ENCODE measurements at regions of chr20 and their contacts with region 1.

Region 1: DNA sequence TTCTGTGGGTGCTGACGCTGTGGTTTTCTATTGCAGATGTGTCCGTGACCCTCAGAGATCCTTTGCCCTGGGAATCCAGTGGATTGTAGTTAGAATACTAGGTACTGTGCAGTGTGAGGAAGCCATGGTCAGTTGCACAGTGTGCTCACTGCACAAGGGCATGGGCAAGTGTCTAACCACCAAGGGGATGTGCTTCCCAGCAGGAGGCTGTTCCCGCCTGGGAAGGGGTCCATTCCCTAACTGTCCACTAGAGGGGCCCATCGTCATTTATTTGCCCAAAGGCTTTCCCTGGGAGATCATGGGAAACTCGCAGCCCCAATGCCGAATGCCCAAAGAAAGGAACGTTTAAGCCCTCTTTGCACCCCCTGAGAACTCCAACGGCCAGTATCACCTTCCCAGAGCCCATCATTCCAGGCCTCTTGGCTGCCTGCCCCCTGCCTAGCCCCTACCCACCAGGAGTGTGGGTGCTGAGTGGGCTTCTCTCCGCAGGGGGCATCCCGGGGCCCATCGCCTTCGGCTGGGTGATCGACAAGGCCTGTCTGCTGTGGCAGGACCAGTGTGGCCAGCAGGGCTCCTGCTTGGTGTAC is 26.2 kb downstream of the SLCO4A1 start:
- H3K4me3 Mint-ChIP-seq: no peak overlapping the region
- H3K27ac Mint-ChIP-seq: no peak overlapping the region
- H3K4me1 Mint-ChIP-seq: peaks cover 64% of the 10 kb centered on the region
- H3K27me3 Mint-ChIP-seq: peaks cover 9% of the 10 kb centered on the region

Region 2: GRCh38 chr20:62571667-62572344 is 96.7 kb before region 1 on chr20:
- intact Hi-C with region 1: no loop called
- H3K4me3 Mint-ChIP-seq: no peak overlapping the region
- H3K27ac Mint-ChIP-seq: no peak overlapping the region
- H3K4me1 Mint-ChIP-seq: no peaks in the 10 kb centered on the region
- H3K27me3 Mint-ChIP-seq: peaks cover 60% of the 10 kb centered on the region

Region 3: GRCh38 chr20:62793912-62794724 is 125.6 kb after region 1 on chr20:
- intact Hi-C with region 1: loop called (anchors 1 kb)
- H3K4me3 Mint-ChIP-seq: peak overlapping the region; percentile 72
- H3K27ac Mint-ChIP-seq: peak overlapping the region; percentile 92
- H3K4me1 Mint-ChIP-seq: peaks cover 57% of the 10 kb centered on the region
- H3K27me3 Mint-ChIP-seq: no peaks in the 10 kb centered on the region

Region 4: GRCh38 chr20:62961310-62961783 is 292.8 kb after region 1 on chr20:
- intact Hi-C with region 1: no loop called
- H3K4me3 Mint-ChIP-seq: no peak overlapping the region
- H3K27ac Mint-ChIP-seq: no peak overlapping the region
- H3K4me1 Mint-ChIP-seq: peaks cover 54% of the 10 kb centered on the region
- H3K27me3 Mint-ChIP-seq: no peaks in the 10 kb centered on the region